ENCODE measurements at regions of chr15 and their contacts with region 1.

Region 1: GRCh38 chr15:64224511-64224910 is 61.7 kb upstream of the PPIB start:
- DNase-seq: no peak
- H3K4me3 Mint-ChIP-seq: no peak overlapping the region
- H3K27ac Mint-ChIP-seq: no peak overlapping the region
- H3K4me1 Mint-ChIP-seq: peaks cover 18% of the 10 kb centered on the region
- H3K27me3 Mint-ChIP-seq: no peaks in the 10 kb centered on the region

Region 2: GRCh38 chr15:64274341-64274950 is 49.9 kb after region 1 on chr15:
- intact Hi-C with region 1: loop called (anchors 10 kb)
- DNase-seq: no peak
- H3K4me3 Mint-ChIP-seq: no peak overlapping the region
- H3K27ac Mint-ChIP-seq: no peak overlapping the region
- H3K4me1 Mint-ChIP-seq: peaks cover 2% of the 10 kb centered on the region
- H3K27me3 Mint-ChIP-seq: no peaks in the 10 kb centered on the region